WTC11 (cell line): ENCODE measurements at regions of chr12 and their contacts with region 1.

Region 1: DNA sequence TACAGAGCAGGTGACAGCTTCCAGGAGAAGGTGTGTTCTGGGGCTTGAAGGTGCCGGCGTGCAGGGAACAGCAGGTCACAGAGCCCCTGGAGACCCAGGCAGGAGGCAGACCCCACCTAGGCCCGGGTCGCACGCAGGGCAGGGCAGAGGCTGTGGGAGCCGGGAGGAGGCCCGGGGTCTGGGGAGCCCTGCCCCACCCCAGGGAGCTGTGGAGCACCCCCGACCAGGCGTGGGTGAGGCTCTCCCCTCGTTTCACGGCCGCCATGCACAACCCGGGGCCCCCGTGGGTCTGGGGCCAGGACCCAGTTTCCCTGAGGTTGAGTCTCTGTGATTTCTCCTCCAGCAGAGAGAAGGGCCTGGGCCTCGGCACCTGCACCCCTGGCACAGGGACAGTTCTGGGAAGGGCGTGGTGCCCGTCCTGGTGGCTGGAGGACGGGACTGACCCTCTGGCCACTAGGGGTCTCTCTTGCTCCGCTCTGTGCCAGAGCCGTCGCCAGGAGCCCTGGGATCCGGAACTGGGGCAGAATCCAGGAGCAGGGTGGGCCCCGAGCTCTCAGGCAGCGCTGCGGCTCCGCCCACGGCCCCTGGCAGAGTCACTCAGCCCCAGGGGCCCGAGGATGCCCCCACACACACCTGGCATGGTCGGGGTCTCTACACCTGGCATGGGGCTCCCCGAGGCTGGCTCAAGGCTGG is 75.2 kb upstream of the FBRSL1 start:
- DNase-seq: peak; percentile 87
- ATAC-seq: peak; percentile 93
- H3K4me3 Mint-ChIP-seq: no peak overlapping the region
- H3K27ac Mint-ChIP-seq: no peak overlapping the region
- H3K4me1 Mint-ChIP-seq: no peaks in the 10 kb centered on the region
- H3K27me3 Mint-ChIP-seq: peaks cover 40% of the 10 kb centered on the region
- CTCF ChIP-seq: peak; percentile 78

Region 2: GRCh38 chr12:132162508-132163031 is 252.2 kb before region 1 on chr12:
- CTCF ChIA-PET with region 1: interaction called, 32 read pairs
- POLR2A ChIA-PET with region 1: no interaction called
- DNase-seq: no peak
- ATAC-seq: no peak
- H3K4me3 Mint-ChIP-seq: no peak overlapping the region
- H3K27ac Mint-ChIP-seq: no peak overlapping the region
- H3K4me1 Mint-ChIP-seq: no peaks in the 10 kb centered on the region
- H3K27me3 Mint-ChIP-seq: peaks cover 17% of the 10 kb centered on the region
- CTCF ChIP-seq: no peak

Region 3: GRCh38 chr12:132275110-132275531 is 139.7 kb before region 1 on chr12:
- CTCF ChIA-PET with region 1: interaction called, 36 read pairs
- POLR2A ChIA-PET with region 1: no interaction called
- DNase-seq: peak; percentile 66
- ATAC-seq: peak; percentile 91
- H3K4me3 Mint-ChIP-seq: peak overlapping the region; percentile 32; the same call in 1 of the 2 replicates
- H3K27ac Mint-ChIP-seq: peak overlapping the region; percentile 81; the same call in 1 of the 2 replicates
- H3K4me1 Mint-ChIP-seq: peaks cover 26% of the 10 kb centered on the region
- H3K27me3 Mint-ChIP-seq: peaks cover 12% of the 10 kb centered on the region
- CTCF ChIP-seq: no peak

Region 4: GRCh38 chr12:132314035-132314434 is 100.7 kb before region 1 on chr12:
- CTCF ChIA-PET with region 1: no interaction called
- POLR2A ChIA-PET with region 1: no interaction called
- DNase-seq: no peak
- ATAC-seq: no peak
- H3K4me3 Mint-ChIP-seq: no peak overlapping the region
- H3K27ac Mint-ChIP-seq: no peak overlapping the region
- H3K4me1 Mint-ChIP-seq: no peaks in the 10 kb centered on the region
- H3K27me3 Mint-ChIP-seq: peaks cover 47% of the 10 kb centered on the region
- CTCF ChIP-seq: no peak

Region 5: GRCh38 chr12:132373901-132374611 is 40.7 kb before region 1 on chr12:
- CTCF ChIA-PET with region 1: interaction called, 42 read pairs
- POLR2A ChIA-PET with region 1: no interaction called
- DNase-seq: no peak
- ATAC-seq: peak; percentile 65
- H3K4me3 Mint-ChIP-seq: no peak overlapping the region
- H3K27ac Mint-ChIP-seq: no peak overlapping the region
- H3K4me1 Mint-ChIP-seq: peaks cover 14% of the 10 kb centered on the region
- H3K27me3 Mint-ChIP-seq: peaks cover 85% of the 10 kb centered on the region
- CTCF ChIP-seq: no peak

Region 6: GRCh38 chr12:132400011-132400641 is 14.7 kb before region 1 on chr12:
- CTCF ChIA-PET with region 1: interaction called, 35 read pairs
- POLR2A ChIA-PET with region 1: no interaction called
- DNase-seq: peak; percentile 22
- ATAC-seq: 0 out of 2 replicates have a peak, but pooled peaks have one; percentile 36
- H3K4me3 Mint-ChIP-seq: no peak overlapping the region
- H3K27ac Mint-ChIP-seq: no peak overlapping the region
- H3K4me1 Mint-ChIP-seq: peaks cover 10% of the 10 kb centered on the region
- H3K27me3 Mint-ChIP-seq: peaks cover 50% of the 10 kb centered on the region
- CTCF ChIP-seq: no peak

Region 7: GRCh38 chr12:132518354-132518941 is 103.7 kb after region 1 on chr12:
- CTCF ChIA-PET with region 1: interaction called, 17 read pairs
- POLR2A ChIA-PET with region 1: interaction called, 3 read pairs
- DNase-seq: no peak
- ATAC-seq: no peak
- H3K4me3 Mint-ChIP-seq: no peak overlapping the region
- H3K27ac Mint-ChIP-seq: no peak overlapping the region
- H3K4me1 Mint-ChIP-seq: no peaks in the 10 kb centered on the region
- H3K27me3 Mint-ChIP-seq: peaks cover 43% of the 10 kb centered on the region
- CTCF ChIP-seq: no peak

Region 8: GRCh38 chr12:132582058-132582420 is 167.3 kb after region 1 on chr12:
- CTCF ChIA-PET with region 1: interaction called, 17 read pairs
- POLR2A ChIA-PET with region 1: no interaction called
- DNase-seq: peak; percentile 61
- ATAC-seq: peak; percentile 51
- H3K4me3 Mint-ChIP-seq: peak overlapping the region; percentile 60
- H3K27ac Mint-ChIP-seq: no peak overlapping the region
- H3K4me1 Mint-ChIP-seq: peaks cover 5% of the 10 kb centered on the region
- H3K27me3 Mint-ChIP-seq: peaks cover 51% of the 10 kb centered on the region
- CTCF ChIP-seq: no peak